MCF 10A (cell line): ENCODE measurements at regions of chr2 and their contacts with region 1.

Region 1: GRCh38 chr2:197113275-197113711 is 186.8 kb upstream of the PGAP1 start:
- DNase-seq: peak; percentile 43
- H3K4me3 Mint-ChIP-seq: no peak overlapping the region
- H3K27ac Mint-ChIP-seq: no peak overlapping the region
- H3K4me1 Mint-ChIP-seq: no peaks in the 10 kb centered on the region
- H3K27me3 Mint-ChIP-seq: no peaks in the 10 kb centered on the region
- CTCF ChIP-seq: peak; percentile 63

Region 2: GRCh38 chr2:196849895-196850294 is 263.4 kb before region 1 on chr2:
- CTCF ChIA-PET with region 1: interaction called, 3 read pairs
- POLR2A ChIA-PET with region 1: no interaction called
- intact Hi-C with region 1: loop called (anchors 10 kb)
- DNase-seq: peak; percentile 39
- H3K4me3 Mint-ChIP-seq: no peak overlapping the region
- H3K27ac Mint-ChIP-seq: no peak overlapping the region
- H3K4me1 Mint-ChIP-seq: peaks cover 6% of the 10 kb centered on the region
- H3K27me3 Mint-ChIP-seq: no peaks in the 10 kb centered on the region
- CTCF ChIP-seq: peak; percentile 34

Region 3: GRCh38 chr2:197097578-197098366 is 15.5 kb before region 1 on chr2:
- CTCF ChIA-PET with region 1: interaction called, 20 read pairs
- POLR2A ChIA-PET with region 1: interaction called, 3 read pairs
- intact Hi-C with region 1: no loop called
- DNase-seq: peak; percentile 29
- H3K4me3 Mint-ChIP-seq: no peak overlapping the region
- H3K27ac Mint-ChIP-seq: no peak overlapping the region
- H3K4me1 Mint-ChIP-seq: peaks cover 9% of the 10 kb centered on the region
- H3K27me3 Mint-ChIP-seq: no peaks in the 10 kb centered on the region
- CTCF ChIP-seq: no peak

Region 4: GRCh38 chr2:197137231-197137630 is 23.9 kb after region 1 on chr2:
- CTCF ChIA-PET with region 1: interaction called, 21 read pairs
- POLR2A ChIA-PET with region 1: no interaction called
- intact Hi-C with region 1: no loop called
- DNase-seq: peak; percentile 56
- H3K4me3 Mint-ChIP-seq: no peak overlapping the region
- H3K27ac Mint-ChIP-seq: no peak overlapping the region
- H3K4me1 Mint-ChIP-seq: peaks cover 17% of the 10 kb centered on the region
- H3K27me3 Mint-ChIP-seq: no peaks in the 10 kb centered on the region
- CTCF ChIP-seq: no peak

Region 5: GRCh38 chr2:197179744-197180498 is 66.6 kb after region 1 on chr2:
- CTCF ChIA-PET with region 1: interaction called, 14 read pairs
- POLR2A ChIA-PET with region 1: no interaction called
- intact Hi-C with region 1: no loop called
- DNase-seq: peak; percentile 31
- H3K4me3 Mint-ChIP-seq: no peak overlapping the region
- H3K27ac Mint-ChIP-seq: no peak overlapping the region
- H3K4me1 Mint-ChIP-seq: peaks cover 8% of the 10 kb centered on the region
- H3K27me3 Mint-ChIP-seq: no peaks in the 10 kb centered on the region
- CTCF ChIP-seq: no peak

Region 6: GRCh38 chr2:197216361-197216979 is 103.2 kb after region 1 on chr2:
- CTCF ChIA-PET with region 1: no interaction called
- POLR2A ChIA-PET with region 1: no interaction called
- intact Hi-C with region 1: no loop called
- DNase-seq: no peak
- H3K4me3 Mint-ChIP-seq: no peak overlapping the region
- H3K27ac Mint-ChIP-seq: no peak overlapping the region
- H3K4me1 Mint-ChIP-seq: no peaks in the 10 kb centered on the region
- H3K27me3 Mint-ChIP-seq: no peaks in the 10 kb centered on the region
- CTCF ChIP-seq: no peak

Region 7: DNA sequence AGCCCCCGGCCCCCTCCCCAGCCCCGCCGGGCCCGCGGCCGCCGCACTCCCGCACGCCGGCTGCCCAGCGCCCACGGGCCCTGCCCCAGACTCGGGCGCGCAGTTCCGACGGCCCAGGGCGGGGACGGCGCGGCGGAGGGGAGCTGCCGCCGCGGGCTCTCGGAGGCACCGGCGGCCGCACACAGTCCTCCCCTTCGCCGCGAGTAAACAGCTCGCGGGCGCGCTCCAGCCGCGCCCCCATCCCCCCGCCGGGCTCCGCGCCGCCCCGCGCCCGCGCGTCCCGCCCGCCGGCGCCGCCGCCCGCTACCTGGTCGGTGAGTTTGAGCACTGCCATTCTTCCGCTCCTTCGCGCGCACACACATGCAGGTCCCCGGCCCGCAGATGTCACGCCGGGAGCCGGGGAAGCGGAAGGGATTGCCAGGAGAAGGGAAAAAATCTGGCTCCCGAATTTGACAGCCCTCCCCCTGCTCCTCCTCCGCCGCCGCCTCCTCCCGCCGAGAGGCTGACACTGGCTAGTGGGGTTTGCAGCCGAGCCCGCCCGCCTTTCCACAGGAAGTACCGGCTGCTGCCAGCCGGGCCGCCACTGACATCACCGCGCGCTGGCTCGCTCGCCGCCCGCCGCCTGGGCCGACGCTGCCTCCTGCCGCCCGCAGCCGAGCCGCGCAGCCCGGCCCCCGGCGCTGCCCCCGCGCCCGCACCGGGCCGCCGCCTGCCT is 197.1 kb after region 1 on chr2 and contains the start of gene ANKRD44:
- CTCF ChIA-PET with region 1: interaction called, 8 read pairs
- POLR2A ChIA-PET with region 1: no interaction called
- intact Hi-C with region 1: loop called (anchors 1 kb)
- DNase-seq: peak; percentile 79
- H3K4me3 Mint-ChIP-seq: peak within 1 kb of the TSS; percentile 78
- H3K27ac Mint-ChIP-seq: peak within 1 kb of the TSS; percentile 3
- H3K4me1 Mint-ChIP-seq: peaks cover 10% of the 10 kb centered on the region
- H3K27me3 Mint-ChIP-seq: no peaks in the 10 kb centered on the region
- CTCF ChIP-seq: peak; percentile 23
- total RNA-seq, gene ANKRD44: 4.4 and 6.9 TPM in 2 replicates

Region 8: GRCh38 chr2:197383823-197384222 is 270.5 kb after region 1 on chr2:
- CTCF ChIA-PET with region 1: interaction called, 60 read pairs
- POLR2A ChIA-PET with region 1: interaction called, 3 read pairs
- intact Hi-C with region 1: no loop called
- DNase-seq: no peak
- H3K4me3 Mint-ChIP-seq: no peak overlapping the region
- H3K27ac Mint-ChIP-seq: no peak overlapping the region
- H3K4me1 Mint-ChIP-seq: peaks cover 11% of the 10 kb centered on the region
- H3K27me3 Mint-ChIP-seq: peaks cover 12% of the 10 kb centered on the region
- CTCF ChIP-seq: no peak